Natural killer cell (primary cell): ENCODE measurements at regions of chr1 and their contacts with region 1.

Region 1: DNA sequence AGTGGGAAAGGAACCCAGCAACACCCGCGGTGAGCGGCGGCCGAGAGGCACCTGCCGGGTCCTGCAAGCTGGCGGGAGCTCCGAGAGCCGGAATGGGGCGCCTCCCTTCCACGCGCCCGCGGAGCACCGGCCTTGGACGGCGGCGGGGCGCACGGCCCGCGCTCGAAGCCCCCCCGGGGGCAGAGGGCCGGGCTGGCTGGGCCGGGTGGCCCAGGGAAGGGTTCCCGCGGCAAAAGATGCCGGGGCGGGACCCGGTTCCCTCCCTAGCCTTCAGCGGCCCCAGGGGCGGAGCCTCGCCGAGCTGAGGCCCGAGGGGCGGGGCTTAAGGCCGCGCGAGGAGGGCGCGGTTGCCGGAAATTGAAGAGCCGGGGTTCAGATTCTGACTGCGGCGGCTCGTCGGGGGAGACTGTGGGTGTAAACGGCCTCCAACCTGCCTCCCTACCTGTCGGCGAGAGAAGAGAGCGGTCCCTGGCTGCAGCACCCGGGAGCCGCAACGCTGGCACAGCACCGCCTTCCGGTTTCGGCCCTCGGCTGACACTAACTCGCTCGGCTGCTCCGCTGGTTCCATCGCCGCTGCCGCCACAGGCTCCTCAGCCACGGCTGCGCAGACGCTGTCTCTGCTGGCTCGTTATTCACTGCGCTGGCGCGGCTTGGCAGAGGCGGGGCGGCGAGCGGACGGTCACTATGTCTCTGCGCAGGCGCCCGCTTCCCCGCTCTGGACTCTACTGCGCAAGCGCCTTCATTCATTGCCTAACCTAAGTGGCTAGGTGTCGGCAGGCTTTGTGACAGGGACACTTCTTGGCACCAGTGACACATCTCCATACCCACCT is at the start of gene RABIF:
- DNase-seq: peak; percentile 96 to 98
- ATAC-seq: peak; percentile 91 to 96 (median 91)
- H3K4me3 ChIP-seq: peak within 1 kb of the TSS; percentile 75
- H3K4me3 Mint-ChIP-seq: peak within 1 kb of the TSS; percentile 97
- H3K27ac ChIP-seq: peak within 1 kb of the TSS; percentile 87
- H3K27ac Mint-ChIP-seq: peak within 1 kb of the TSS; percentile 91 to 95
- H3K4me1 ChIP-seq: peaks cover 9% of the 10 kb centered on the region
- H3K4me1 Mint-ChIP-seq: peaks cover 14 to 27% of the 10 kb centered on the region in 2 donors
- H3K27me3 ChIP-seq: no peaks in the 10 kb centered on the region
- H3K27me3 Mint-ChIP-seq: no peaks in the 10 kb centered on the region
- CTCF ChIP-seq: no peak
- total RNA-seq, gene RABIF: 13.3 to 26.4 (median 21.5) TPM

Region 2: GRCh38 chr1:202810615-202811295 is 78.0 kb before region 1 on chr1 and contains the start of gene PCAT6:
- intact Hi-C with region 1: loop called (anchors 2 kb)
- DNase-seq: peak; percentile 86 to 92
- ATAC-seq: peak; percentile 80 to 91 (median 87)
- H3K4me3 ChIP-seq: peak within 1 kb of the TSS; percentile 66
- H3K4me3 Mint-ChIP-seq: peak within 1 kb of the TSS; percentile 84
- H3K27ac ChIP-seq: peak within 1 kb of the TSS; percentile 73
- H3K27ac Mint-ChIP-seq: peak within 1 kb of the TSS; percentile 82 to 90
- H3K4me1 ChIP-seq: peaks cover 22% of the 10 kb centered on the region
- H3K4me1 Mint-ChIP-seq: peaks cover 34 to 53% of the 10 kb centered on the region in 2 donors
- H3K27me3 ChIP-seq: no peaks in the 10 kb centered on the region
- H3K27me3 Mint-ChIP-seq: no peaks in the 10 kb centered on the region
- CTCF ChIP-seq: no peak
- total RNA-seq, gene PCAT6: 1.1 to 1.5 TPM in 2 of 3 donors, not detected in the other

Region 3: GRCh38 chr1:202957733-202958543 is 69.2 kb after region 1 on chr1 and contains the start of gene ADIPOR1:
- intact Hi-C with region 1: loop called (anchors 2 kb)
- DNase-seq: peak; percentile 89 to 95
- ATAC-seq: peak; percentile 96 to 99 (median 96)
- H3K4me3 ChIP-seq: peak within 1 kb of the TSS; percentile 74
- H3K4me3 Mint-ChIP-seq: peak within 1 kb of the TSS; percentile 86
- H3K27ac ChIP-seq: peak within 1 kb of the TSS; percentile 82
- H3K27ac Mint-ChIP-seq: peak within 1 kb of the TSS; percentile 85 to 90
- H3K4me1 ChIP-seq: peaks cover 13% of the 10 kb centered on the region
- H3K4me1 Mint-ChIP-seq: peaks cover 23 to 37% of the 10 kb centered on the region in 2 donors
- H3K27me3 ChIP-seq: no peaks in the 10 kb centered on the region
- H3K27me3 Mint-ChIP-seq: no peaks in the 10 kb centered on the region
- CTCF ChIP-seq: no peak
- total RNA-seq, gene ADIPOR1: 61.9 to 81.7 (median 80.6) TPM

Region 4: DNA sequence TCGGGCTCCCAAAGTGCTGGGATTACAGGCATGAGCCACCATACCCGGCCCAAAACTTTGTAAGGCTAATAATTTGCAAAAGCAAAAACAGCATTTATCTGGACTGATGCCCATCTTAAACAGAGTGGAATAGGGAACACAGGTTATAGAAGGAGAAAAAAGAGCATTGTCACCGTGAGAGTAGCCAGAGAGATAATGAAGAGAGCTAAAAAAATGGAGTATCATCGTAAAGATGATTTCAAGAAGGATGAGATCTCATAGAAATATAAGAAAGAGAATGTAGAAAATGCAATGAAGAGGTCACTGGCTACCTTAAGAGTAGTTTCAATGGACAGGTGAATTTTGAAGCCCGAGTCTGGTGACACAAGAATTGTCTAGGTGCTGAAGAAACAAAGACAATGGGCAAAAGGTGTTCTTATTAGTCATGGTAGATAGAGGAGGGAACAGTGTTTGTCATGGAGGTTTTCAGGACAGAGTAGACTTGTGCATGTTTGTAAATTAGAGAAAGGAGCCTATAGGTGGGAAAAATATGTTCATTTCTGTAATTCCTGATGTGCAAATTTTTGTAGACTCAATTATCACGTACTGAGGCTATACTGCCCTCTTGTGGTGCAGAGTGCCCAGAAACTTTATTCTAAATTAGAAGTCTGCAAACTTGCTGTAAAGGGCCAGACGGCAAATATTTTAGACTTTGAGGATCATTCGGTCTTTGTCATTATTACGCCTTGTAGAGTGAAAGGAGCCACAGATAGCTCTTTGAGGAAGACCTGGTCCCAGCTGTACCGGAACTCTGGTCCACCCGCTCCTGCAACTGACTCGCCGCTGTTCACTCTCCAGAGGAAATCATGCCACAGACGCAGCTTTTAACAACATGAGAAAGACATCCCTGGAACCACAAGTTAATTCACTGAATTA is 110.3 kb after region 1 on chr1:
- intact Hi-C with region 1: loop called (anchors 5 kb)
- DNase-seq: peak; percentile 30 to 84
- ATAC-seq: peak; percentile 66 to 69 (median 67)
- H3K4me3 ChIP-seq: no peak overlapping the region
- H3K4me3 Mint-ChIP-seq: no peak overlapping the region
- H3K27ac ChIP-seq: no peak overlapping the region
- H3K27ac Mint-ChIP-seq: no peak overlapping the region
- H3K4me1 ChIP-seq: peaks cover 4% of the 10 kb centered on the region
- H3K4me1 Mint-ChIP-seq: peaks cover 5% of the 10 kb centered on the region in 2 donors
- H3K27me3 ChIP-seq: no peaks in the 10 kb centered on the region
- H3K27me3 Mint-ChIP-seq: peaks cover 25 to 42% of the 10 kb centered on the region in 2 donors
- CTCF ChIP-seq: peak; percentile 93